GM12878 (cell line): ENCODE measurements at regions of chr10 and their contacts with region 1.

Region 1: GRCh38 chr10:113958631-113959382 is 84.9 kb upstream of the ADRB1 start:
- DNase-seq: no peak
- ATAC-seq: 0 out of 3 replicates have a peak, but pooled peaks have one; percentile 3
- H3K4me3 ChIP-seq: no peak overlapping the region
- H3K27ac ChIP-seq: peak overlapping the region; percentile 87
- H3K4me1 ChIP-seq: peaks cover 41% of the 10 kb centered on the region
- H3K27me3 ChIP-seq: no peaks in the 10 kb centered on the region
- CTCF ChIP-seq: no peak
- EP300 ChIP-seq: no peak
- POLR2A ChIP-seq: no peak
- RAD21 ChIP-seq: no peak

Region 2: DNA sequence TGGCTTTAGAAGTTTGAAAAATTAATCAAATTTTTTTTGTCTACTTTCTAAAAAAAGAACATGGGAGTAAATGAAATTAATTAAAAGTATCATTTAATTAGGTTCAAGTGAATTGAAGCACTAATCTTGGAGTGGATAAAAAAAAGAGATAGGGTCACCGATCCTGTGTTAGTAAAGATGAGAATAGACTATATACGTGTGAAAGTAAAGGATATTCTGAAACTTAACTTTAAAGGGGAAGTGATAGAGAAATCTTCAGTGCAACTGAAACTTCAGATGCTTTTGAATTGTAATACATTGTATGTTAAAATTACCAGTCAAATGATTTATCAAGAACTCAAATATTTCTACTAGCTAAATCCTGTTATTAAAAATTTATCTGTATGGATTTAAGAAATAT is 99.5 kb before region 1 on chr10:
- CTCF ChIA-PET with region 1: interaction called, 6 read pairs
- POLR2A ChIA-PET with region 1: interaction called, 8 read pairs
- RAD21 ChIA-PET with region 1: interaction called, 31 read pairs
- SMC1A ChIA-PET with region 1: interaction called, 13 read pairs
- in situ Hi-C with region 1: no loop called
- intact Hi-C with region 1: loop called (anchors 5 kb)
- DNase-seq: no peak
- ATAC-seq: peak; percentile 42
- H3K4me3 ChIP-seq: peak overlapping the region; percentile 46
- H3K27ac ChIP-seq: peak overlapping the region; percentile 92
- H3K4me1 ChIP-seq: peaks cover 11% of the 10 kb centered on the region
- H3K27me3 ChIP-seq: no peaks in the 10 kb centered on the region
- CTCF ChIP-seq: no peak
- EP300 ChIP-seq: peak; percentile 14 to 48; a peak in 1 of 4 replicates
- POLR2A ChIP-seq: no peak
- RAD21 ChIP-seq: no peak

Region 3: DNA sequence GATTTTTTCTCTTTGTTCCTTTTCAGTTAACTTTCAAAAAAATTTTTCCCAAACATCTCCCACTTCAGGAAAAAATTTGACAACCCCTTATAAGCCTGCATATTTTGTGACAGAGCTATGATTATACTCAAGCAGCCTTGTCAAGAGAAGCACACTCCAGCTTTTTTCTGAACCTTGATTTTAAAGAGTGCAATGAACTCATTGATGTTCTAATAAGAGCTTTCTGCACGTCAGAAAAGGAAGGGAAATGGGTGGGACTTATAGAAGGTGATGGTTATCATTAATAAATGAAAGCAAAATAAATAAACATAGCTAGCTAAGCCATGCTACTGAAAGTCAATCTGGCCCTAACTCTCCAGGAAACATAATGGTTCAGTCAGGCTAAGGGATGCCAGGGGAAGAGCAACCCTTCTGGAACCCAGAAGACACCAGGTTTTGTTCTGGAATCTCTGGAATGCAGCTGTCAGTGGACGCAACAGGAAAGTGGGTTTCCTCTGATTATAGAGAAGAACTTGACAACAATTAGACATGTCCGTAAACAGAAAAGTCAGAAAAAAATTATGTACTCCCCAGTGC is 28.2 kb before region 1 on chr10:
- CTCF ChIA-PET with region 1: interaction called, 7 read pairs
- POLR2A ChIA-PET with region 1: interaction called, 5 read pairs
- RAD21 ChIA-PET with region 1: no interaction called
- SMC1A ChIA-PET with region 1: interaction called, 10 read pairs
- in situ Hi-C with region 1: no loop called
- intact Hi-C with region 1: no loop called
- DNase-seq: no peak
- ATAC-seq: no peak
- H3K4me3 ChIP-seq: no peak overlapping the region
- H3K27ac ChIP-seq: no peak overlapping the region
- H3K4me1 ChIP-seq: no peaks in the 10 kb centered on the region; the same call in 1 of the 2 replicates
- H3K27me3 ChIP-seq: no peaks in the 10 kb centered on the region
- CTCF ChIP-seq: no peak
- EP300 ChIP-seq: no peak
- POLR2A ChIP-seq: no peak
- RAD21 ChIP-seq: no peak

Region 4: GRCh38 chr10:114024876-114025610 is 66.2 kb after region 1 on chr10:
- CTCF ChIA-PET with region 1: interaction called, 3 read pairs
- POLR2A ChIA-PET with region 1: interaction called, 9 read pairs
- RAD21 ChIA-PET with region 1: interaction called, 15 read pairs
- SMC1A ChIA-PET with region 1: interaction called, 17 read pairs
- in situ Hi-C with region 1: no loop called
- intact Hi-C with region 1: loop called (anchors 2 kb)
- DNase-seq: peak; percentile 86
- ATAC-seq: peak; percentile 90
- H3K4me3 ChIP-seq: peak overlapping the region; percentile 51
- H3K27ac ChIP-seq: peak overlapping the region; percentile 86
- H3K4me1 ChIP-seq: peaks cover 25% of the 10 kb centered on the region
- H3K27me3 ChIP-seq: no peaks in the 10 kb centered on the region
- CTCF ChIP-seq: no peak
- EP300 ChIP-seq: peak; percentile 61 to 78
- POLR2A ChIP-seq: peak; percentile 73
- RAD21 ChIP-seq: peak; percentile 35; the same call in 1 of the 2 replicates

Region 5: DNA sequence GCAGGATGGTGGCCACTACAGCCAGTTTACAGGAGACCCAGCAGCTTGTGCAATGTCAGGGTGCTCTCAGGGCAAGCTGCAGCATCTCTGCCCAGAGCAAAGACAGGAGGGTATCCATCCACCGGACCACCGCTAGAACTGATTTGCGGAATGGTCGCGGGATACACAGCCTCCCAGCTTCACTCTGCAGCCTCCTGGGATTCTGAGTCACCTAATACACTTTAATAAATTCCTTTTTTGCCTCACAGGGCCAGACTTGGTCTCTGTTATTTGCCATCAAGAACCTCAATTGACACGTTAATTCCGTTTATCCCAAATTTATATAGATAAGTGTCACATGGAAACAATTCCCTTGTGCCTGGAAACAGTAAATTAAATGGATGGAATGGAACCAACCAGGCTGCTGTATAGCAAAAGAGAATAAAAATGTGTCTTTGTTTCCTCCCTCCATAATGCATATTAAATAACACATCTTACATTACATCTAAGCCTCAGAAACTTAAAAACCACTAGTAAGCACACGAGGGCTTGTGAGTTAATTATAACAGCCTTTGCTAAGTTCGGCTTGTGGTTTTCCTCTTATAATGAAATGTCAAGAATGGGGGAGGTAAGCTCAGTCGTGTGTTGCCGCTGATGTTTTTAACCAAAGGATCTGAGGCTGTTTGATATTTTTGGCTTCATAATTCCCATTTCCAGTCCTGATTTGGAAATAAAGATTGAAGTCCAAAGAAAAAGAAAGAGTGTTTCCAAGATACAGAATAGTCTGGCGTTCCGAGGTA is 136.9 kb after region 1 on chr10:
- CTCF ChIA-PET with region 1: interaction called, 3 read pairs
- POLR2A ChIA-PET with region 1: interaction called, 5 read pairs
- RAD21 ChIA-PET with region 1: interaction called, 11 read pairs
- SMC1A ChIA-PET with region 1: interaction called, 7 read pairs
- in situ Hi-C with region 1: no loop called
- intact Hi-C with region 1: loop called (anchors 2 kb)
- DNase-seq: no peak
- ATAC-seq: peak; percentile 69
- H3K4me3 ChIP-seq: peak overlapping the region; percentile 31; the same call in 1 of the 2 replicates
- H3K27ac ChIP-seq: peak overlapping the region; percentile 50
- H3K4me1 ChIP-seq: peaks cover 47% of the 10 kb centered on the region
- H3K27me3 ChIP-seq: no peaks in the 10 kb centered on the region; a peak in 1 of 4 replicates
- CTCF ChIP-seq: no peak
- EP300 ChIP-seq: peak; percentile 33 to 49; a peak in 2 of 4 replicates
- POLR2A ChIP-seq: no peak
- RAD21 ChIP-seq: peak; percentile 18; the same call in 1 of the 2 replicates

Region 6: DNA sequence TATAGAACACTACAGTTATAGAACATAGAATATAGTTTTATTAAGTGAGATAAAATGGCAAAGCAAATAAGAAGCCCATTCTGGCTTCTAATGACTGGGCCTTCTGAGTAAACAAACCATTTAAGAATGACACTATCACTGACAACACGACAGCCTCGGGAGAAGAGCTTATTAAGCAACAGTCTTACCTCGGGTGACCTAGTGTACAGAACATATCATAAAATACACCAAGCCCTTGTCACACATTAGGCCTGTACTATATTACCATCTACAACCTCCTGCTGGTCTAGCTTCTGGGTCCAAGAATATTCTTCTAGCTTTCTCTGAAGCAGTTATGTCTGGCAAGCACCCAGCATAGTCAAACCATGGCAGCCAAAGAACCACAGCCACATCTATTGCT is 183.2 kb after region 1 on chr10:
- CTCF ChIA-PET with region 1: no interaction called
- POLR2A ChIA-PET with region 1: no interaction called
- RAD21 ChIA-PET with region 1: no interaction called
- SMC1A ChIA-PET with region 1: no interaction called
- in situ Hi-C with region 1: no loop called
- intact Hi-C with region 1: no loop called
- DNase-seq: no peak
- ATAC-seq: no peak
- H3K4me3 ChIP-seq: no peak overlapping the region
- H3K27ac ChIP-seq: no peak overlapping the region
- H3K4me1 ChIP-seq: no peaks in the 10 kb centered on the region
- H3K27me3 ChIP-seq: no peaks in the 10 kb centered on the region
- CTCF ChIP-seq: no peak
- EP300 ChIP-seq: no peak
- POLR2A ChIP-seq: no peak
- RAD21 ChIP-seq: no peak